ENCODE measurements at regions of chr14 and their contacts with region 1.

Region 1: GRCh38 chr14:61837336-61838229 is 75.4 kb downstream of the SNAPC1 start:
- DNase-seq: peak; percentile 48 to 56
- ATAC-seq: peak; percentile 81 to 97
- H3K4me3 ChIP-seq: no peak overlapping the region
- H3K27ac ChIP-seq: no peak overlapping the region
- H3K4me1 ChIP-seq: no peaks in the 10 kb centered on the region
- H3K27me3 ChIP-seq: no peaks in the 10 kb centered on the region
- CTCF ChIP-seq: peak; percentile 78 to 94 (median 86)
- POLR2A ChIP-seq: no peak

Region 2: DNA sequence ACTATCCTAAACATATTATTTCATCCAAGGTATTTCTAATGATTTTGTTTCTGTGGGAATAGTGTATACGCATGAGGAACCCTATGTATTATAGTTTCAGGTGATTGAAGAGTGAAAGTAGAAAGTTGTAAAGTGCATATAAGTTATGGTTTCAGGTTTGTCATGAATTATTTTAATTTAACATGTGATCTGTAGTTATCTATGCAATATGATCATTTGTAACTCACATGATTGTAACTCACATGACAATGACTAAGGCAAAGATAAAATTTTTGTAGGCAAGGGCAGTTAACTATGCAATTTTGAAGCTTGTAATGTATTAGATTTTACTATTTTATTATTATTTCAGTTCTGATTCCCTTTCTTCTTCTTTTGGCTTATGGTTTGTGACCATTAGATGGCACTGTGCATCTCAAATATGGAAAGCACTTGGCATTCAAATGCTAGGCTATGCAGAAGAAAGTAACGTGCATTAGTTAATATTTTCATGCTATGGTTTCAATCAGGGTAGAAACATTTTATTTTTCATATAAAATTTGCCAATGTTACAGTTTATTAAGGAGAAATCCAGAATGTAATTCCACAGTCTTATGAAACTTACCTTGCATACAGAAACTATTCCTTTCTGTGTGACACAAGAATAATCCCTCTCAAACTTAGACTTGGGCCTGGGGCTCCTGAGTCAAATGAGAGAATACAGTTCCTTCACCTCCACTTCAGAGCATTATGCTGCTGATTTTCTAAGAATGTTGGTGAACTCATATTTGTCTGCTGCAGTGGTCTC is 540.7 kb before region 1 on chr14:
- in situ Hi-C with region 1: loop called in 3 of 4 experiments (anchors 5 to 25 kb)
- intact Hi-C with region 1: loop called (anchors 10 kb)
- DNase-seq: no peak
- ATAC-seq: peak; percentile 62
- H3K4me3 ChIP-seq: no peak overlapping the region
- H3K27ac ChIP-seq: no peak overlapping the region
- H3K4me1 ChIP-seq: peaks cover 11 to 13% of the 10 kb centered on the region in 2 donors
- H3K27me3 ChIP-seq: no peaks in the 10 kb centered on the region
- CTCF ChIP-seq: peak; percentile 23 to 67 (median 55)
- POLR2A ChIP-seq: no peak

Region 3: GRCh38 chr14:61321385-61322010 is 516.1 kb before region 1 on chr14 and contains the start of gene PRKCH:
- in situ Hi-C with region 1: loop called in 2 of 4 experiments (anchors 25 kb)
- intact Hi-C with region 1: no loop called
- DNase-seq: peak; percentile 37 to 48
- ATAC-seq: peak; percentile 69 to 73
- H3K4me3 ChIP-seq: peak within 1 kb of the TSS; percentile 71 to 89 (median 74)
- H3K27ac ChIP-seq: peak within 1 kb of the TSS; percentile 60 to 78 (median 78)
- H3K4me1 ChIP-seq: peaks cover 0 to 3% of the 10 kb centered on the region in 2 donors
- H3K27me3 ChIP-seq: no peaks in the 10 kb centered on the region
- CTCF ChIP-seq: peak in 1 of 5 experiments; percentile 10
- POLR2A ChIP-seq: peak; percentile 21 to 49
- total RNA-seq, gene PRKCH: 11.3 to 32.4 (median 16.6) TPM

Region 4: GRCh38 chr14:61730756-61731373 is 106.7 kb before region 1 on chr14:
- in situ Hi-C with region 1: no loop called
- intact Hi-C with region 1: loop called (anchors 10 kb)
- DNase-seq: no peak
- ATAC-seq: no peak
- H3K4me3 ChIP-seq: no peak overlapping the region
- H3K27ac ChIP-seq: no peak overlapping the region
- H3K4me1 ChIP-seq: no peaks in the 10 kb centered on the region
- H3K27me3 ChIP-seq: no peaks in the 10 kb centered on the region
- CTCF ChIP-seq: peak in 4 of 5 experiments; percentile 20 to 49 (median 40)
- POLR2A ChIP-seq: no peak

Measured in gastrocnemius medialis (tissue), 4 donors.